ENCODE measurements at regions of chr7 and their contacts with region 1.

Region 1: GRCh38 chr7:101688183-101688831 is 59.2 kb upstream of the MYL10 start:
- DNase-seq: peak; percentile 61 to 92 (median 81)
- ATAC-seq: peak; percentile 86
- H3K4me3 ChIP-seq: no peak overlapping the region
- H3K4me3 Mint-ChIP-seq: no peak overlapping the region
- H3K27ac ChIP-seq: no peak overlapping the region
- H3K27ac Mint-ChIP-seq: no peak overlapping the region
- H3K4me1 ChIP-seq: no peaks in the 10 kb centered on the region
- H3K4me1 Mint-ChIP-seq: peaks cover 3% of the 10 kb centered on the region
- H3K27me3 ChIP-seq: no peaks in the 10 kb centered on the region
- H3K27me3 Mint-ChIP-seq: peaks cover 2% of the 10 kb centered on the region
- CTCF ChIP-seq: peak; percentile 93

Region 2: GRCh38 chr7:101594790-101595189 is 93.5 kb before region 1 on chr7:
- CTCF ChIA-PET with region 1: no interaction called
- POLR2A ChIA-PET with region 1: no interaction called
- intact Hi-C with region 1: no loop called
- DNase-seq: no peak
- ATAC-seq: no peak
- H3K4me3 ChIP-seq: no peak overlapping the region
- H3K4me3 Mint-ChIP-seq: no peak overlapping the region
- H3K27ac ChIP-seq: no peak overlapping the region
- H3K27ac Mint-ChIP-seq: no peak overlapping the region
- H3K4me1 ChIP-seq: no peaks in the 10 kb centered on the region
- H3K4me1 Mint-ChIP-seq: no peaks in the 10 kb centered on the region
- H3K27me3 ChIP-seq: no peaks in the 10 kb centered on the region
- H3K27me3 Mint-ChIP-seq: peaks cover 4% of the 10 kb centered on the region
- CTCF ChIP-seq: no peak

Region 3: DNA sequence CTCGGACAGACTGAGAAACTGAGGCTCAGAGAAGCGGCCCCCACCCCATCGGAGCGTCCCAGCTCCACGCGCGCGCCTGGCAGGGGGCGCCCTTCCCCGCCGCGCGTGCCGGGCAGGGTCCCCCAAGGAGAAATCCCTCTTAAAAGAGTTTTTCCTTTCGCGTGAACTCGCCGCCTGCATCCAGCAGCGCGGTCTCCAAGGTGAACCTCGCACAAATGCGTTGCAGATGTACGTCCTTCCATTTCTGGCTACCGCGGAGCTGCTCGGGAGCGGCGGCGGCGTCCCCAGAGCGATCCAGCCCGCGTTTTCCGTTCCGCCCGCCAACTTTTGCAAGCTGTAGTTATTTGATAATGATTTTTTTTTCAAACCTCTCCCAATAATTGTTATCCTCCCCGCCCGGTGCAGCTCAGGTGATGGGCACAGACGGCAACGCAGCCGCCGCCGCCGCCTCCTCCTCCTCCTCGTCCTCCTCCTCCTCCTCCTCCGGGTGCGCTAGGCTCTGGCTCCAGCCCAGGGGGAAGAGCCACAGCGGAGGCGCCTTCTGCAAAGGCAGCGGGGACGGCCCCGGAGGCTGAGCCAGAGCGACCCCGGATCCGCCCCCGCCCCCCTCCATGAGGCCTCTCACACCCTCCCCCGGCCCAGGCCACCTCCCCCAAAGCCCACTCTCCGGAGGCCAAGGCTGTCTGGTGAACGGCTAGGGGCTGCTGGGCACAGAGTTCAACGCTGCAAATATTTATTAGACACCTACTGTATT is 55.1 kb after region 1 on chr7:
- CTCF ChIA-PET with region 1: interaction called, 15 read pairs
- POLR2A ChIA-PET with region 1: interaction called, 4 read pairs
- intact Hi-C with region 1: loop called (anchors 1 kb)
- DNase-seq: peak; percentile 44 to 79 (median 68)
- ATAC-seq: peak; percentile 76
- H3K4me3 ChIP-seq: peak overlapping the region; percentile 56 to 69
- H3K4me3 Mint-ChIP-seq: peak overlapping the region; percentile 81
- H3K27ac ChIP-seq: no peak overlapping the region
- H3K27ac Mint-ChIP-seq: no peak overlapping the region
- H3K4me1 ChIP-seq: peaks cover 39% of the 10 kb centered on the region
- H3K4me1 Mint-ChIP-seq: peaks cover 32% of the 10 kb centered on the region
- H3K27me3 ChIP-seq: peaks cover 0 to 3% of the 10 kb centered on the region in 2 experiments
- H3K27me3 Mint-ChIP-seq: no peaks in the 10 kb centered on the region
- CTCF ChIP-seq: peak; percentile 59

Region 4: GRCh38 chr7:101815835-101816493 is 127.7 kb after region 1 on chr7:
- CTCF ChIA-PET with region 1: interaction called, 10 read pairs
- POLR2A ChIA-PET with region 1: interaction called, 3 read pairs
- intact Hi-C with region 1: loop called (anchors 1 kb)
- DNase-seq: peak; percentile 39 to 88 (median 71)
- ATAC-seq: peak; percentile 78
- H3K4me3 ChIP-seq: peak overlapping the region; percentile 38 to 55
- H3K4me3 Mint-ChIP-seq: peak overlapping the region; percentile 85
- H3K27ac ChIP-seq: no peak overlapping the region
- H3K27ac Mint-ChIP-seq: no peak overlapping the region
- H3K4me1 ChIP-seq: peaks cover 16% of the 10 kb centered on the region
- H3K4me1 Mint-ChIP-seq: peaks cover 36% of the 10 kb centered on the region
- H3K27me3 ChIP-seq: no peaks in the 10 kb centered on the region
- H3K27me3 Mint-ChIP-seq: no peaks in the 10 kb centered on the region
- CTCF ChIP-seq: no peak

Region 5: GRCh38 chr7:101856473-101857357 is 168.4 kb after region 1 on chr7:
- CTCF ChIA-PET with region 1: no interaction called
- POLR2A ChIA-PET with region 1: no interaction called
- intact Hi-C with region 1: loop called (anchors 1 kb)
- DNase-seq: peak; percentile 62 to 90 (median 77)
- ATAC-seq: peak; percentile 92
- H3K4me3 ChIP-seq: peak overlapping the region; percentile 59 to 69
- H3K4me3 Mint-ChIP-seq: peak overlapping the region; percentile 99
- H3K27ac ChIP-seq: peak overlapping the region; percentile 62 to 88
- H3K27ac Mint-ChIP-seq: peak overlapping the region; percentile 99
- H3K4me1 ChIP-seq: peaks cover 20% of the 10 kb centered on the region
- H3K4me1 Mint-ChIP-seq: peaks cover 50% of the 10 kb centered on the region
- H3K27me3 ChIP-seq: no peaks in the 10 kb centered on the region
- H3K27me3 Mint-ChIP-seq: no peaks in the 10 kb centered on the region
- CTCF ChIP-seq: peak; percentile 55

Region 6: DNA sequence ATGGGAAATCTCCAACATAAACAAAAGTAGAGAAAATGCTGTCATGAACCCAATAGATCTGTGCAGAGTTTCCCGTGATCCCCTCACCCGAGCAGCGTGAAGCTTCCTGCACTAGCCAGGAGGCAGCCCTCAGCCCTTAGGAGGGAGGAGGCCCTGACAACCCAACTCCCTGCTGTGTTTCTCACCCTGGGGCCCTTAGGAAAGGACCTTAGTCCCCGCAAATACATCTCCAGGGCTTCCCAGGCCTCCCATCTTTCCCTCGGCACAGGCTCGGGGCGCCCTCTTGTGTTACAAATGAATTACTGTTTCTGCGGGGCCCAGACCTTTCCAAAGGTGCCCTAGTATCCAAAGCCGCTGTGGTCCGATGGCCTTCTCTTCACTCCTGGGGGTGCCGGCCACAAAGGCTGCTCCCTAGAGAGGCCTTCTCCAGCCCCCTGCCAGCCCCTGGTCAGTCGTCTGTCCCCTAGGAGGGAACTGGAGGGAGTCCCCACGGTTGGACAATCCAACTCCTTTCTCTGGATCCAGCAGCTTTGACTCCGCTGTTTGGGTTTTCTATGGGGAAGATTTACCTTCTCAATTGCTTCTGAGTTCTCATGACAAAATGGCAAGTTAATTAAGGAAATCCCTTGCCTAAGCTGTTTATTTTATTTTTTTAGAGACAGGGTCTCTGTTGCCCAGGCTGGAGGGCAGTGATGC is 548.4 kb after region 1 on chr7:
- CTCF ChIA-PET with region 1: interaction called, 5 read pairs
- POLR2A ChIA-PET with region 1: no interaction called
- intact Hi-C with region 1: loop called (anchors 1 to 5 kb)
- DNase-seq: peak in 7 of 9 experiments; percentile 9 to 55 (median 38)
- ATAC-seq: no peak
- H3K4me3 ChIP-seq: no peak overlapping the region
- H3K4me3 Mint-ChIP-seq: no peak overlapping the region
- H3K27ac ChIP-seq: no peak overlapping the region
- H3K27ac Mint-ChIP-seq: no peak overlapping the region
- H3K4me1 ChIP-seq: no peaks in the 10 kb centered on the region
- H3K4me1 Mint-ChIP-seq: no peaks in the 10 kb centered on the region
- H3K27me3 ChIP-seq: no peaks in the 10 kb centered on the region
- H3K27me3 Mint-ChIP-seq: no peaks in the 10 kb centered on the region
- CTCF ChIP-seq: peak; percentile 52

Region 7: DNA sequence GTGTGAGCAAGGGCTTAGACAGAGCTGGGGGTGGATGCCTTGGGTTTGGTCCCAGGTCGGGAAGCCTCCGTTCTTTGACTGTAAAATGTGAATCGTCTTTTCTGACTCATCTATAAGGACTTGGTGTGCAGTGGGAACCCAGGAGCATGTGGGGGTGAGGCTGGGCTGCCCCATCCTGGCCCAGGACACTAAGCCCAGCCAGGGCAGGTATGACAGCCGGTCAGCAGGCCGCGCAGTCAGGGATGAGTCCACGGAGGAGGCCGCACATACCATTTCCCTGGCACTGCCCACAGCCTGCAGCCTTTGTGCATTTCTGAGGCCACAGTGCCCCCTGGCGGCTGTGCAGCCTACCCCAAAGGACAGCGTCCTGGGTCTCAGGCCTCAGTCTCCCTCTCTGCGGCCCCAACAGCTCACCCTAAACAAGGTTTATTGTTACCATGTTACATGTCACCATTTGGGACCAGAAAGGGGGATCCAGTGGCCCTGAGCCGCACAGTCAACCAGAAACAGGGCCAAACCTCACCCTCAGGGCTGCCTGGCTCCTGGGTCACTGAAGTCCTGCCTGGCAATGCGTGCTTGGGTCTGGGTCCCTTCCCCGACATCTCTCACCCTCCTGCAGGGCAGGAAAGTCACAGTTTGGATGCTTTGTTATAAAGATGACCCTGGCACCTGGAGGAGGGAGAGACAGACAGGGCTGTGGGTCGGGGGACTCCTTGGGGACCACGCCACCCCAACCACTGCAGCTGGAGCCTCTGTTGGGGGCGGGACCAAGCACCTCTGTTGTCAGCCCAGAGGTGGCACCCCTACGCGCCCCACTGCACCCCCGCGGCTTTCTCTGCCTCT is 584.0 kb after region 1 on chr7:
- CTCF ChIA-PET with region 1: interaction called, 5 read pairs
- POLR2A ChIA-PET with region 1: no interaction called
- intact Hi-C with region 1: loop called in 1 of 2 experiments (anchors 2 kb)
- DNase-seq: peak; percentile 51 to 87 (median 76)
- ATAC-seq: peak; percentile 77
- H3K4me3 ChIP-seq: no peak overlapping the region
- H3K4me3 Mint-ChIP-seq: no peak overlapping the region
- H3K27ac ChIP-seq: no peak overlapping the region
- H3K27ac Mint-ChIP-seq: no peak overlapping the region
- H3K4me1 ChIP-seq: peaks cover 2% of the 10 kb centered on the region
- H3K4me1 Mint-ChIP-seq: peaks cover 2% of the 10 kb centered on the region
- H3K27me3 ChIP-seq: no peaks in the 10 kb centered on the region
- H3K27me3 Mint-ChIP-seq: no peaks in the 10 kb centered on the region
- CTCF ChIP-seq: peak; percentile 83

Measured in CD8-positive, alpha-beta T cell (primary cell).